Sigmoid colon (tissue), 7 donors: ENCODE measurements at regions of chr4 and their contacts with region 1.

Region 1: DNA sequence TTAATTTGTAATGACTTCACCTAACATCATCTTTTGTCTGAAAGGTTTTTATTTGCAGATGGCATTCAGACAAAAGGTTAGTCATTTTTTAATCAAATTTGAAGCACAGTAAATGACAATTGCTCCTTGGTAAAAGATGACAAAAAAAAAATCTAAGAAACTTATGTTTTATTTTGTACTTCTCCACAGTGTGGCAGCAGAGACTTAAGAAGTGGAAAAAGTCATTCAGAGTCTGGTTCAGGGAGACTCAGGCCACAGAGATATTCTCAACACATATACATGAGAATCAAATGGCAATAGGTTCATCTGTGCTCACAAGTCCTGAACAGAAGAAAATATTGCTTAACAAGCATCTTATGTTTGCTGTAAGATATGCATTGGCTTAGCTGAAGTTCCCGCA is 436.2 kb downstream of the KCNIP4 start:
- DNase-seq: no peak
- H3K4me3 ChIP-seq: no peak overlapping the region
- H3K27ac ChIP-seq: no peak overlapping the region
- H3K4me1 ChIP-seq: no peaks in the 10 kb centered on the region
- H3K27me3 ChIP-seq: no peaks in the 10 kb centered on the region
- CTCF ChIP-seq: peak in 2 of 4 experiments; percentile 38 to 45
- EP300 ChIP-seq: no peak
- POLR2A ChIP-seq: no peak

Region 2: GRCh38 chr4:21113496-21114223 is 398.7 kb before region 1 on chr4:
- intact Hi-C with region 1: no loop called
- DNase-seq: no peak
- H3K4me3 ChIP-seq: no peak overlapping the region
- H3K27ac ChIP-seq: peak overlapping the region in 3 of 4 donors; percentile 14 to 37 (median 32)
- H3K4me1 ChIP-seq: peaks cover 0 to 40% (median 22%) of the 10 kb centered on the region in 4 donors
- H3K27me3 ChIP-seq: no peaks in the 10 kb centered on the region
- CTCF ChIP-seq: no peak
- EP300 ChIP-seq: no peak
- POLR2A ChIP-seq: no peak

Region 3: DNA sequence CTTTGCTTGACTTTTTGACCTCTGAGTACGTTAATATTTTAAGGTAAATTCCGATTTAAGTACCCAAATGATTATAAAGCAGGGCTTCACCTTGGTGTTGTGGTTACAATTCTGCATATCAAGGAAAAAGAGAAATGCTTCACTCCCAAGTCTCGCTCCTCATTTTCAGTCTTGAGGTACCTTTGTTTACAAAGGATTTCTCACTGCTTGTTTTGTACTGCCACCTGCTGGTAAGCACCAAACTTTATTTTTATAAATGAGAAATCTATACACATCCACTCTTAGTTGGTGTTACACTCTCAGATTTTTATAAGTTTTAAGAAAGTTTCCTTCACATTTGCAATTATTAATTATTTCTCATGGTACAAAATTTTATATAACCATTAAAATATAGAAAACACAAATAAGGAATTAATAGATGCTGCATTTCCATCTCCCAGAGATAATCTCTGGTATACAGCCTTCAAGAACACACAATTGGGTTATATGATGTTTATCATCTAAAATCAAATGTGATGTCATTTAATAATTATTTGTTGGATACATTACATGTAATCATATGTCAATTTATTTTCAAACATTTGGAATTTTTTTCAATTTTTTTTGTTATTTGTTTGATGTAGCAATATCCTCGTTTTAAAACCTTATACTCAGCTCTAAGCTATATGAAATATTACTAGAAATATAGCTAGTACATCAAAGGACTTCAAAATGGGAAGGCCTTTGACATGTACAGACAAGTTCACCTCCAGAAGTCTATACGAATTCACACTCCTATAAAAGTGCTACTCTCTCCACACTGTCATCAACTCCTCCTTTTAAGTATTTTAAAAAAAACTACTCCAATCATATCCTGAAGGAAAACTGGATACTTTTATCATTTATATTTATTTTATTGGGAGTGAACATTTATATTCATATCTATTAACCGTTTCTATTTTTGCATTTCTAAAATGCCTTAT is 256.3 kb after region 1 on chr4:
- intact Hi-C with region 1: loop called (anchors 1 kb)
- DNase-seq: no peak
- H3K4me3 ChIP-seq: no peak overlapping the region
- H3K27ac ChIP-seq: no peak overlapping the region
- H3K4me1 ChIP-seq: peaks cover 0 to 10% (median 3%) of the 10 kb centered on the region in 4 donors
- H3K27me3 ChIP-seq: no peaks in the 10 kb centered on the region
- CTCF ChIP-seq: peak; percentile 54 to 72 (median 62)
- EP300 ChIP-seq: no peak
- POLR2A ChIP-seq: no peak